A549 (cell line): ENCODE measurements at regions of chr3 and their contacts with region 1.

Region 1: GRCh38 chr3:14261229-14261628 is 82.6 kb downstream of the LSM3 start:
- DNase-seq: peak; percentile 87 to 90
- ATAC-seq: peak; percentile 80 to 90
- H3K4me3 ChIP-seq: no peak overlapping the region
- H3K27ac ChIP-seq: no peak overlapping the region
- H3K4me1 ChIP-seq: peaks cover 13% of the 10 kb centered on the region
- CTCF ChIP-seq: peak; percentile 95
- EP300 ChIP-seq: no peak
- POLR2A ChIP-seq: no peak
- RAD21 ChIP-seq: peak; percentile 98 to 99

Region 2: DNA sequence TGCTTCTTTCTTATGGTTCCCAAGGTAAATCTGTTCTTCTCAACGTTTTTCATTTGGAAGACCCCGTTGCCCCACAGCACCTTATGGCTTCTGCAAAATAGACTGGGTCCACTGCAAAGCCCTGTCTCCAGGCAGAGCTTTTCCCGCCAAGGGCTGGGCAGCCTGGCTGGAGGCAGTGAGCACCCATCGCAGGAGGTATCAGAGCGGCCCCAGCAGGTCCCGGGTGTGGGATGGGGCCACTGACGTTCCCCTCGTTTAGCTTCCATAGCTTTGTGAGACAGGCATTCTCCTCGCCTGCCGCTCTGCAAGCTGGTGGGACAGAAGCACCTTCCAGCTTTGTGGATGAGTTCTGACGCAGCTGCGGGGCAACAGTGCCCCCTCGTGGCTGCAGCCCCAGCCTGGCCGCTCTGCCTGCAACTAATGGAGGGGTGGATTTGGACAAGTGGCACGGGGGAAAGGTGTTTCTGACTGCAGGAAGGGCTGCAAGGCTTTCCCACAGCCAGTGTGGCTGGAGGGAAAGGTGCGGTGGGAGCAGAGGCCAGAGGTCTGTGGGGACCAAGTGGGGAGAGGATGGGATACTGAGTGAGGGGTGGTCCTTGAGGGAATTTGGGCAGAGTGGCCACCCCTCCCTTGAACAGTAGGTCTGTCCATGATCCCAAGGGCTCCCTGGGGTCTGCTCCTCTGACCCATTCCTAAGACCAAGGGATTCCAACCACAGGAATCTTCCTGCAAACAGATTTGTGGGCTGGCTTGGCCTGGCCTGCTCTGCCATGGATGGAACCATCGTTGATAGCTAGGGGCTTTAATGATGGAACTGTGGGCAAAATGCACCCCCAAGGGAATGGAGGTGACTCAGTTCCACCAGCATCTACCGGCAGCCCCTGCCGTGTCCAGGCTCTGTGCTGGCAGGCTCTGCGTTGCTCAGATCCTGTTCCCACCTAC is 612.9 kb before region 1 on chr3:
- CTCF ChIA-PET with region 1: no interaction called
- POLR2A ChIA-PET with region 1: no interaction called
- DNase-seq: peak; percentile 82 to 95
- ATAC-seq: peak; percentile 65 to 88
- H3K4me3 ChIP-seq: no peak overlapping the region
- H3K27ac ChIP-seq: peak overlapping the region in 1 of 2 experiments; percentile 50; a peak in 2 of 6 replicates
- H3K4me1 ChIP-seq: peaks cover 7% of the 10 kb centered on the region; the same call in 1 of the 3 replicates
- CTCF ChIP-seq: peak; percentile 95
- EP300 ChIP-seq: no peak
- POLR2A ChIP-seq: no peak
- RAD21 ChIP-seq: peak; percentile 98

Region 3: GRCh38 chr3:14274999-14275961 is 14.1 kb after region 1 on chr3:
- CTCF ChIA-PET with region 1: interaction called, 23 read pairs
- POLR2A ChIA-PET with region 1: no interaction called
- DNase-seq: peak in 1 of 2 experiments; percentile 45
- ATAC-seq: peak in 1 of 2 experiments; percentile 45; a peak in 3 of 6 replicates
- H3K4me3 ChIP-seq: no peak overlapping the region
- H3K27ac ChIP-seq: no peak overlapping the region; a peak in 1 of 6 replicates
- H3K4me1 ChIP-seq: peaks cover 15% of the 10 kb centered on the region
- CTCF ChIP-seq: peak; percentile 33; the same call in 2 of the 3 replicates
- EP300 ChIP-seq: no peak
- POLR2A ChIP-seq: no peak
- RAD21 ChIP-seq: peak in 1 of 2 experiments; percentile 47; a peak in 2 of 5 replicates

Region 4: GRCh38 chr3:14312371-14312770 is 51.1 kb after region 1 on chr3:
- CTCF ChIA-PET with region 1: interaction called, 10 read pairs
- POLR2A ChIA-PET with region 1: no interaction called
- DNase-seq: no peak
- ATAC-seq: peak in 1 of 2 experiments; percentile 26; a peak in 1 of 6 replicates
- H3K4me3 ChIP-seq: no peak overlapping the region
- H3K27ac ChIP-seq: no peak overlapping the region
- H3K4me1 ChIP-seq: no peaks in the 10 kb centered on the region
- CTCF ChIP-seq: no peak
- EP300 ChIP-seq: no peak
- POLR2A ChIP-seq: no peak
- RAD21 ChIP-seq: no peak

Region 5: DNA sequence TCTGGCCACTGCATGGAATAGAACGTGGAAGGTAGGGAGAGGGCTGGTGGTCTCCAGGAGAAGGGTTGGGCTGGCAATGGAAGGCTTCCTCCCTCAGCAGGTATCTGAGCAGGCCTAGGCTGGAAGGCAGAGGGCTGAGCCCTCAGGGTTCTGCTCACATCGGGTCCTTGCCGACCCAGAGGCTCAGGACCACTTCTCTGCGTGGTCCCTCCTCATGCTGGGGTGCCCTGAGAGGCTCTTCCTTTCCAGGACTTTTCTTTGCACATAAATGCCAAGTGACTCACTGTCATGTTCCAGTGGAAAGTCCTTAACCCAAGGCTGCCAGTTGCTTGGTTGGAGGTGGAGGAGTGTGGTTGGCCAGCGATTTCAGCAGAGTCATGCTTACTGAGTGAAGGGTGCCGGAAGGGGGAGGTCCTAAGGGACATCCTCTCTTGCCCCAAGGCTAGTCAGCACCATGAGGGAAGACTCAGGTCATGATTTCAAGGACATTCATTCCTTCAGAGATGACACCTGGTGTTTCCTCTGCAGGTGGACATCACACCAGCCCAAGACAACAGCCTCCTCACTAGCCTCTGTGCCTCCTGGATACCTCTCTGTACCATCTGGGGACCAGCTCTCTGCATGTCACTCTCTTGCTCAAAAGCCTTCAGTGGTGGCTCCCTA is 149.4 kb after region 1 on chr3:
- CTCF ChIA-PET with region 1: interaction called, 10 read pairs
- POLR2A ChIA-PET with region 1: no interaction called
- DNase-seq: peak; percentile 87 to 98
- ATAC-seq: peak; percentile 82 to 85
- H3K4me3 ChIP-seq: no peak overlapping the region
- H3K27ac ChIP-seq: peak overlapping the region; percentile 92 to 98
- H3K4me1 ChIP-seq: peaks cover 99% of the 10 kb centered on the region
- CTCF ChIP-seq: no peak
- EP300 ChIP-seq: peak; percentile 60 to 80; a peak in 3 of 5 replicates
- POLR2A ChIP-seq: no peak
- RAD21 ChIP-seq: no peak

Region 6: GRCh38 chr3:14461748-14462324 is 200.6 kb after region 1 on chr3:
- CTCF ChIA-PET with region 1: interaction called, 173 read pairs
- POLR2A ChIA-PET with region 1: no interaction called
- DNase-seq: peak; percentile 71 to 79
- ATAC-seq: peak; percentile 75 to 82
- H3K4me3 ChIP-seq: no peak overlapping the region
- H3K27ac ChIP-seq: peak overlapping the region; percentile 21 to 61; a peak in 3 of 6 replicates
- H3K4me1 ChIP-seq: peaks cover 44% of the 10 kb centered on the region
- CTCF ChIP-seq: peak; percentile 62
- EP300 ChIP-seq: no peak
- POLR2A ChIP-seq: no peak
- RAD21 ChIP-seq: peak; percentile 82

Region 7: DNA sequence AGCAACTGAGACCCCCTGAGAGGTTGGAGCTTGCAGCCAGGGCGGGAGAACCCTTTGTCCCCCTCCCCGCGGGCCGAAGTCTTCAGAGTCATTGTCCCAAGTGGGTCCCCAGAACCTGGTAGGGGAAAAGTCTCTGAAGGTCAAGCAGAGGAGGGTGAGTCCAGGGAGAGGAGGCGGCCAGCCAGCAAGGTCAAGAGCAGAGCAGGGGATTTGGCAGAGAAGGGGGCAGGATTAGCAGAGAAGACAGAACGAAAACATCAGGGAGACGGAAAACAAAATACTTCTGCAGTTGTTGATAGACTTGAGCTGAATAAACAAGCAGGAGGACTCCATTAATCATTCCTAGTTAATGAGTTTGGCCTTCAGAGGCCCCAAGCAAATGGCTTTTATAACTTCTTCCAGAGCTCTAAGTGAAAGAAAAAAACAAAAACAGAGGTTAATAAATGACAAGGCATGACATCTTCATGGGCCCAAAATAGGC is 212.2 kb after region 1 on chr3:
- CTCF ChIA-PET with region 1: interaction called, 101 read pairs
- POLR2A ChIA-PET with region 1: no interaction called
- DNase-seq: no peak
- ATAC-seq: no peak
- H3K4me3 ChIP-seq: no peak overlapping the region
- H3K27ac ChIP-seq: peak overlapping the region in 1 of 2 experiments; percentile 66; a peak in 3 of 6 replicates
- H3K4me1 ChIP-seq: peaks cover 29% of the 10 kb centered on the region
- CTCF ChIP-seq: no peak
- EP300 ChIP-seq: no peak
- POLR2A ChIP-seq: no peak
- RAD21 ChIP-seq: no peak

Region 8: DNA sequence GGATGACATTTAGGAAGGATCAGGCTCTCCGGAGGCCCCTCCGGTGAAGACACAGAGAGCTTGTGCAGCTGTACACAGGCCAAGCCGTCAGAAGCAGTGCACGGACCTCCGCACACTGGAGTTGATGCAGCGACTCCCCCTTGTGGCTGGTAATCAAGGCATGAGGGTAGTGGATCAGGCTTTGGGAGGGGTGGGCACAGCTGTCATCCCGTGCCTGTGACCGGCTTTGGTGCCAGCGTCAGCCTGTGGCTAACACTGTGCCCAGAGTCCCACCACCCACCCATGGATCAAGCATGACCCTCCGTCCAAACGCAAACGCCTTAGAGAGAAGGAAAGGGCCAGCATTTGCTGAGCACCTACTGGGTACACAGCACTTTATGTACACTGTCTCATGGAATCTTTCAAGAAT is 287.1 kb after region 1 on chr3:
- CTCF ChIA-PET with region 1: interaction called, 14 read pairs
- POLR2A ChIA-PET with region 1: no interaction called
- DNase-seq: peak; percentile 67 to 76
- ATAC-seq: peak; percentile 86 to 96
- H3K4me3 ChIP-seq: no peak overlapping the region
- H3K27ac ChIP-seq: peak overlapping the region in 1 of 2 experiments; percentile 28; a peak in 1 of 6 replicates
- H3K4me1 ChIP-seq: peaks cover 16% of the 10 kb centered on the region
- CTCF ChIP-seq: peak; percentile 78
- EP300 ChIP-seq: no peak
- POLR2A ChIP-seq: no peak
- RAD21 ChIP-seq: peak; percentile 73 to 82